Activated CD4-positive, alpha-beta T cell treated with anti-CD3 and anti-CD28 coated beads, Interleukin-2, amount 10 ng/mL, durations not matched to agents 24 days and 14 days (primary cell): ENCODE measurements at regions of chr11 and their contacts with region 1.

Region 1: GRCh38 chr11:129434641-129435498 is 59.2 kb downstream of the BARX2 start:
- DNase-seq: no peak
- H3K4me3 Mint-ChIP-seq: no peak overlapping the region
- H3K27ac Mint-ChIP-seq: peak overlapping the region; percentile 75
- H3K4me1 Mint-ChIP-seq: peaks cover 21% of the 10 kb centered on the region
- H3K27me3 Mint-ChIP-seq: no peaks in the 10 kb centered on the region

Region 2: GRCh38 chr11:129402772-129403171 is 32.1 kb before region 1 on chr11:
- intact Hi-C with region 1: no loop called
- DNase-seq: no peak
- H3K4me3 Mint-ChIP-seq: no peak overlapping the region
- H3K27ac Mint-ChIP-seq: no peak overlapping the region
- H3K4me1 Mint-ChIP-seq: no peaks in the 10 kb centered on the region
- H3K27me3 Mint-ChIP-seq: peaks cover 4% of the 10 kb centered on the region

Region 3: DNA sequence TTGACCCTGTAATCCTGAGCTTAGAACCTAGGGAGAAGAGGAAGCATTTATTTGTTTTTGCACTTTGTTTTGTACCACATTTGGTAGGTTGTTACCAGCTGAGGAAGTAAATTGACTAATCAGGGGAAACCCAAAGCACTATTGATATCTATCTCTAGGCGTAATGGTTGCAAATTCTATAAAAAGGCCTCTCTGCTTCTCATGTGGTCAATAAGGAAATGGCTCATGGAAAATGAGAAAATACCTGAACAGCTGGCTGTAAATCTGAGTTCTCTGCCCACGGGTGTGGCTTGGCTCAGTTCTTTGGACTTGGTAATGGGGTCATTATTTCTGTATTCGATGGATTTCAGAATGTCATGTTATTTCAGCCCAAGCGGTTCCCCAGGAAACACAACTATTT is 16.8 kb before region 1 on chr11:
- intact Hi-C with region 1: loop called (anchors 1 kb)
- DNase-seq: peak; percentile 57
- H3K4me3 Mint-ChIP-seq: no peak overlapping the region
- H3K27ac Mint-ChIP-seq: peak overlapping the region; percentile 35
- H3K4me1 Mint-ChIP-seq: peaks cover 23% of the 10 kb centered on the region
- H3K27me3 Mint-ChIP-seq: no peaks in the 10 kb centered on the region